ENCODE measurements at regions of chr15 and their contacts with region 1.

Region 1: DNA sequence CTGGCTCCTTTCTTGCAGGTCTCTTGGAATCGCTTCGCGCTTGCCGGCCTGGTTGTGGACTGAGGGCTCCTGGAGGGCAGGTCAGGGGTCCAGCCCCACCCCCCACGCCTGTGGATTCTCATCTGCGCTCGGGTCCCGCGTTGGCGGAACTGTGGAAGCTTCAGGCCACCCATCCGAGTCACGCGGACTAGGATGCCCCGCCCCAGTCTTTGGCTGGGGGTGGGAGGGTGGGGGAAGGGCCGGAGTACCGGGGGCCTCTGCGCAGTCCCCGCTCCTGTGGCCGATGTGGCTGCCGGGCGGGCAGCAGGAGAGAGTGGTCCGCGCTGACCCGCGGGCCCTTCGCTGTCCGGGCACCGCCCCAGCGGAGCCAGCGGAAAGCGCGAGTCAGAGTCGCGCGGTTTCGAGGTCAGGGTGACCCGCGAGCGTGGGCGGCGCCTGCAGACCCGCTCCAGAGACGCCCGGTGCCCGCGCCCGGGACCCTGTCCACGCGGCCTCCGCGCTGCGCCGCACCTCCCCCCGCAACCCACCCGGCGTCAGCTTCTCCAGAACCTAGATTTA is 114.2 kb downstream of the KLF13 start:
- DNase-seq: no peak
- H3K4me3 ChIP-seq: peak overlapping the region; percentile 34 to 69 (median 39)
- H3K27ac ChIP-seq: no peak overlapping the region
- H3K4me1 ChIP-seq: no peaks in the 10 kb centered on the region; a peak in 2 of 7 replicates
- H3K27me3 ChIP-seq: peaks cover 0 to 13% (median 10%) of the 10 kb centered on the region in 4 experiments; a peak in 5 of 7 replicates
- CTCF ChIP-seq: no peak
- EP300 ChIP-seq: no peak
- POLR2A ChIP-seq: no peak
- RAD21 ChIP-seq: no peak

Region 2: GRCh38 chr15:31316135-31316795 is 124.6 kb before region 1 on chr15:
- CTCF ChIA-PET with region 1: no interaction called
- POLR2A ChIA-PET with region 1: no interaction called
- DNase-seq: no peak
- H3K4me3 ChIP-seq: no peak overlapping the region
- H3K27ac ChIP-seq: no peak overlapping the region
- H3K4me1 ChIP-seq: peaks cover 4 to 9% (median 7%) of the 10 kb centered on the region in 4 experiments; a peak in 6 of 7 replicates
- H3K27me3 ChIP-seq: no peaks in the 10 kb centered on the region
- CTCF ChIP-seq: no peak
- EP300 ChIP-seq: no peak
- POLR2A ChIP-seq: no peak
- RAD21 ChIP-seq: no peak

Region 3: GRCh38 chr15:31365655-31366127 is 75.1 kb before region 1 on chr15:
- CTCF ChIA-PET with region 1: interaction called, 31 read pairs
- POLR2A ChIA-PET with region 1: no interaction called
- DNase-seq: peak; percentile 44 to 78
- H3K4me3 ChIP-seq: peak overlapping the region in 1 of 4 experiments; percentile 32; a peak in 1 of 8 replicates
- H3K27ac ChIP-seq: no peak overlapping the region
- H3K4me1 ChIP-seq: peaks cover 8 to 53% (median 45%) of the 10 kb centered on the region in 4 experiments
- H3K27me3 ChIP-seq: no peaks in the 10 kb centered on the region
- CTCF ChIP-seq: peak; percentile 37 to 48 (median 44)
- EP300 ChIP-seq: no peak
- POLR2A ChIP-seq: no peak
- RAD21 ChIP-seq: peak; percentile 13 to 50; a peak in 3 of 4 replicates

Region 4: DNA sequence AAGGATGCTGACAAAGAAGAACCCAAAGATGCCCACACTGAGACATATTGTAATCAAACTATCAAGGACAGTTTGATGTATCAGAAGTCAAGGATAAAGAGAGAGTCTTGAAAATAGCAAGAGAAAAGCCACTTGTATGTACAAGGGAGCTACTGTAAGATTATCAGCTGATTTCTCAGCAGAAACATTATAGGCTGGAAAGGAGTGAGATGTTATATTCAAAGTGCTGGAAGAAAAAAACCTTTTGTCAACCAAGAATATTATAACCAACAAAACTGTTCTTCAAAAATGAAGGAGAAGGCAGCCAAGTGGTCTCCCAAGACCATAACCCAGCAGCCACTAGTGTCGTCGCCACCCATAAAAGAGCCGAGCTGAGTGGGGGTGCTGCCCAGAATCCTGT is 21.0 kb before region 1 on chr15:
- CTCF ChIA-PET with region 1: no interaction called
- POLR2A ChIA-PET with region 1: no interaction called
- DNase-seq: no peak
- H3K4me3 ChIP-seq: no peak overlapping the region
- H3K27ac ChIP-seq: no peak overlapping the region
- H3K4me1 ChIP-seq: no peaks in the 10 kb centered on the region
- H3K27me3 ChIP-seq: no peaks in the 10 kb centered on the region
- CTCF ChIP-seq: no peak
- EP300 ChIP-seq: no peak
- POLR2A ChIP-seq: no peak
- RAD21 ChIP-seq: no peak

Region 5: DNA sequence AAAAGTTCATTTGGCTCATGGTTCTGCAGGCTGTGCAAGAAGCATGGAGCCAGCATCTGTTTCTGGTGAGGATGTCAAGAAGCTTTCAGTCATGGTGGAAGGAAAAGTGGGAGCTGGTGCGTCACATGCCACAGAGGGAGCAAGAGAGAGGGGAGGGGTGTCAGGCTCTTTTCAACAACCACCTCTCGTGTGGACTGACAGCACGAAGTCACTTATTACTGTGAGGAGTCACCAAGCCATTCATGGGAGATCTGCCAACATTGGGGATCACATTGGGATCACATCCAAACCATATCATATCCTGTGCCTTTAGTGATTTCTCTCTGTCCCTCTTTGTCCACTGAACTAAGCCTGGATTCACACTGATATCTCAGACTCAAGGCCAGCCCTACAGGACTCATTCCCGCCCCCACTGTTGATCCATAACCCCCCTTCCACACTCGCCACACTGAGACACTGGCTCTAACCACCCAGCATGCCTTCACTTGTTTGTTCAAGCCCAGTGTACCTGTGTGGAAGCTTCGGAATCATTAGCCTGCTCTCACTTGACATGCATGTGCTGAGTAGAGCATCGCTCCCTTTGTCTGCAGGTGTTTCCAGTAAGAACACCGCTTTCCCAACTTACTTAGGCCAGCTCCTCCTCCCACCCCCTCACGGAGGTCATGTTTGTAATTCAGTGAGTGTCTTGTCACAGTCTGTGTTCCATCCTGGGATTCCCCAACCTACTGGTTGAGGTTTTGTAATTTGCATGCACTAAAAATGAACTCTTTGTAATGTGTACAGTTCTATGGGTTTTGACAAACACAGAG is 18.0 kb after region 1 on chr15:
- CTCF ChIA-PET with region 1: interaction called, 15 read pairs
- POLR2A ChIA-PET with region 1: no interaction called
- DNase-seq: no peak
- H3K4me3 ChIP-seq: no peak overlapping the region
- H3K27ac ChIP-seq: no peak overlapping the region
- H3K4me1 ChIP-seq: peaks cover 0 to 6% (median 0%) of the 10 kb centered on the region in 4 experiments; a peak in 4 of 7 replicates
- H3K27me3 ChIP-seq: no peaks in the 10 kb centered on the region
- CTCF ChIP-seq: no peak
- EP300 ChIP-seq: no peak
- POLR2A ChIP-seq: no peak
- RAD21 ChIP-seq: no peak

Region 6: DNA sequence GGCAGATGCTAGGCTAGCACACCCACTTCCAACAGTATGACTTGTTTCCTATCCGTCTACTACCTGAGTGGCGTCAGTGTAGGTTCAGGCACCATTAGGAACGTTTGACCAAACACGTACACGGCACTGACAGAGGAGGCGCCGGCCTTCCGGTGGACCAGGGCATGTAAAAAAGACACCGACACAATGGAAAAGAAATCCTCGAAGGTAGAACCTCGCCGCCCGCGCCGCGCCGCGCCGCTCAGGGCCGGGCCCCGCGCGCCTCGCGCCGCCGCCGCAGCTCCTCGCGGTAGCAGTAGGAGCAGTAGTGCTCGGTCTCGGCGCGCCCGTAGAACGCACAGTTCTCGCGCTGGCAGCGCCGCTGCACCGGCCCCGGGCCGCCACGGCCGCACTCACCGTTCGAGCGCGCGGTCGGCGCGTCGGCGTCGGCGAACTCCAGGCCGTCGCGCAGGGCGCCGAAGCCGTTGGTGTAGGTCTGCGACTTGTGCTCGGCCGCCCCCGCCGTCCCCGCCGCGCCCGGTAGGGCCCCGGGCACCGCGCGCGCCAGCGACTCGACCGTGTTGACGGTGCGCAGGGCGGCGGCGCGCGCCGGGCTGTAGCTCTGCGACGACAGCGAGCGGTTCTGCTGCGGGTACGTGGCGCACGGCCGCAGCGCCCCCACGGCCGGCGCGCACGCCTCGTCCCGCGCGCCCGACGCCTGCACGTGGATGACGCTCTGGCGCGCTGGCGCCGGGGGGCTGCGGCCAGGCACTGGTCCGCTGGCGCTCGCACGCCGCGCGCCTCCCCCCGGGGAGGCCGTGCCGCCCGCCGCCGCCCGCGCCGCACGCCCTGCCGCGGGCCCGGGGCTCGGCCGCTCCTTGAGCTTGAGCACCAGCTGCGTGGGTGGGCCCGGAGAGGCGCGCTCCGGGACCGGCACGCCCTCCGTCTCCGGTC is 42.5 kb after region 1 on chr15:
- CTCF ChIA-PET with region 1: interaction called, 199 read pairs
- POLR2A ChIA-PET with region 1: no interaction called
- DNase-seq: peak in 1 of 2 experiments; percentile 69
- H3K4me3 ChIP-seq: peak overlapping the region; percentile 7 to 48 (median 25)
- H3K27ac ChIP-seq: no peak overlapping the region
- H3K4me1 ChIP-seq: peaks cover 0 to 5% (median 0%) of the 10 kb centered on the region in 4 experiments; a peak in 4 of 7 replicates
- H3K27me3 ChIP-seq: peaks cover 32 to 39% (median 37%) of the 10 kb centered on the region in 4 experiments
- CTCF ChIP-seq: no peak
- EP300 ChIP-seq: no peak
- POLR2A ChIP-seq: no peak
- RAD21 ChIP-seq: no peak

Region 7: GRCh38 chr15:31537770-31538592 is 97.1 kb after region 1 on chr15:
- CTCF ChIA-PET with region 1: no interaction called
- POLR2A ChIA-PET with region 1: no interaction called
- DNase-seq: peak in 1 of 2 experiments; percentile 45
- H3K4me3 ChIP-seq: no peak overlapping the region
- H3K27ac ChIP-seq: no peak overlapping the region
- H3K4me1 ChIP-seq: peaks cover 0 to 3% (median 2%) of the 10 kb centered on the region in 4 experiments; a peak in 3 of 7 replicates
- H3K27me3 ChIP-seq: no peaks in the 10 kb centered on the region
- CTCF ChIP-seq: no peak
- EP300 ChIP-seq: no peak
- POLR2A ChIP-seq: no peak
- RAD21 ChIP-seq: no peak